ENCODE measurements at regions of chr3 and their contacts with region 1.

Region 1: DNA sequence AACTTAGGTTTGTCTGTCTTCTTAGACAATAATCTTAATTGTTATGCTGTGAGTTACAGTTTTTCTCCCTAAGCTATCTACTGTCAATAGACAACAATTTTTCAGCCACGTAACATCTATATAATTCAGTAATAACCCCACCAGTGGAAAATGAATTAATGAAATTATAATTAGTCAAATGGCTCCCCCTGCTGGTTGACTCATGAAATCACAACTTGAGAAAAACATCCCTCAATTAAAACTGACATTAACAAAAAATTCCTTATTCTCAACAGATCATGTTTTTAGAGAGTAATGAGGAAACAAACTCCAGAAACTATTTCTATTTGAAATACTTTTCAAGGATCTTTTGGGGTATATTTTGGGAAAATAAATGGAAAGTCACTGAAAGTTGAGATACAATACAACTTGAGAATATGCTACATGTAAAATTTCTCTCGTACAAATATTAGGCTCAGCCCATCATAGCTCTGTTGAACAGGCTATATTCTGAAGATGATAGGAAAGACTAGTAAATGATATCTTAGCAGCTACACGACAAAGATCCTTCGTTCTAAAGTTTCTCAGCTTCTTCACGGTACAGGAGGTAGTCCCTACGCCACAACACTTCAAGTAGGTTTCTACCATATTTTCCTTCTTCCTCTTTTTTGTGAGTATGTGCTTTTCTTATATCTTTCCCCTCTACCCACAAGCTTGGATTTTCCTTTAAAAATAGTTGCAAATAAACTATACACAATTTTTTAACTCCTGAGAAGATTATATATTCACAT is 20.7 kb downstream of the PPP1R2 start:
- DNase-seq: peak; percentile 59
- ATAC-seq: no peak
- H3K4me3 Mint-ChIP-seq: no peak overlapping the region
- H3K27ac Mint-ChIP-seq: peak overlapping the region; percentile 2
- H3K4me1 Mint-ChIP-seq: peaks cover 36% of the 10 kb centered on the region
- H3K27me3 Mint-ChIP-seq: no peaks in the 10 kb centered on the region

Region 2: GRCh38 chr3:195226900-195227447 is 295.5 kb before region 1 on chr3:
- CTCF ChIA-PET with region 1: no interaction called
- POLR2A ChIA-PET with region 1: no interaction called
- DNase-seq: peak; percentile 4
- ATAC-seq: peak; percentile 30
- H3K4me3 Mint-ChIP-seq: no peak overlapping the region
- H3K27ac Mint-ChIP-seq: peak overlapping the region; percentile 10
- H3K4me1 Mint-ChIP-seq: peaks cover 19% of the 10 kb centered on the region
- H3K27me3 Mint-ChIP-seq: peaks cover 3% of the 10 kb centered on the region

Region 3: DNA sequence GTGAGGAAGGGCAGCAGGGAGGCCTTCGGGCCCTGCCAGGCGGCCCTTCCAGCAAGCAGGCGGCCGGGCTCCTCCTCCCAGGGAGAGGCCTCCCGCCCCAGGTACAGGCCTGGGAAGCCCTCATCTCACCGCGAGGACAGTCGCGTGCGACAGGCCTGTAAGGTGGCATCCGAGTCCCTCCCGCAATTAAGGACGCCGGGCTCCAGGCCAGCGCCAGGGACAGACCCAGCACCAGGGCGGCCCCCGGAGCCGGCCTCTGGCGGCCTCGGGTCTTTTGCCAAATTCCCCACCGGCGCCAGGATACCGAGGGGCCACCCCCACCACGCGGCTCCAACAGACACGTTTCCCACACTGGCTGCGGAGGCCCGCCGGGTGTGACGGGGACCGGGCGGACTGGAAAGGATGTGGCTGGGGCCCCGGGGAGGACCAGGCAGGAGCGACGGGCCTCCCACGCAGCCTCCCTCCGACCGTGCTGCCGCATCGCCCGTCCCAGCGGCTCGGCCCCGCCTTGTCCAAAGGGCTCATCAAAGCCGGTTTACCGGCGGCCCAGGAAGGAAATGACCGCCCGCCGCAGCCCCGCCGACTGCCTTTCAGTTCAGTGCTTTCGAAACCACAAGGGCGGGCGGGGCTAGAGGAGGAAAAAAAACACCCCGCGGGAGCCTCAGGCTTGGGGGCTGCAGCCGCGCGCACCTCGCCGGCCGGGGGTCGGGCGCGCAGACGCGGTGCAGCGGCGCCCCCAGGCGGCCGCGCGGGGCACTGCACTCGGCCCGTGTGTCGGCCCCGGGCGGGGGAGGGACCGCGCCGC is 262.8 kb before region 1 on chr3:
- CTCF ChIA-PET with region 1: interaction called, 13 read pairs
- POLR2A ChIA-PET with region 1: no interaction called
- DNase-seq: peak; percentile 94
- ATAC-seq: peak; percentile 80
- H3K4me3 Mint-ChIP-seq: peak overlapping the region; percentile 48
- H3K27ac Mint-ChIP-seq: no peak overlapping the region
- H3K4me1 Mint-ChIP-seq: peaks cover 38% of the 10 kb centered on the region
- H3K27me3 Mint-ChIP-seq: no peaks in the 10 kb centered on the region

Region 4: GRCh38 chr3:195508185-195508584 is 14.3 kb before region 1 on chr3:
- CTCF ChIA-PET with region 1: interaction called, 10 read pairs
- POLR2A ChIA-PET with region 1: no interaction called
- DNase-seq: no peak
- ATAC-seq: no peak
- H3K4me3 Mint-ChIP-seq: no peak overlapping the region
- H3K27ac Mint-ChIP-seq: no peak overlapping the region
- H3K4me1 Mint-ChIP-seq: peaks cover 8% of the 10 kb centered on the region
- H3K27me3 Mint-ChIP-seq: no peaks in the 10 kb centered on the region

Region 5: DNA sequence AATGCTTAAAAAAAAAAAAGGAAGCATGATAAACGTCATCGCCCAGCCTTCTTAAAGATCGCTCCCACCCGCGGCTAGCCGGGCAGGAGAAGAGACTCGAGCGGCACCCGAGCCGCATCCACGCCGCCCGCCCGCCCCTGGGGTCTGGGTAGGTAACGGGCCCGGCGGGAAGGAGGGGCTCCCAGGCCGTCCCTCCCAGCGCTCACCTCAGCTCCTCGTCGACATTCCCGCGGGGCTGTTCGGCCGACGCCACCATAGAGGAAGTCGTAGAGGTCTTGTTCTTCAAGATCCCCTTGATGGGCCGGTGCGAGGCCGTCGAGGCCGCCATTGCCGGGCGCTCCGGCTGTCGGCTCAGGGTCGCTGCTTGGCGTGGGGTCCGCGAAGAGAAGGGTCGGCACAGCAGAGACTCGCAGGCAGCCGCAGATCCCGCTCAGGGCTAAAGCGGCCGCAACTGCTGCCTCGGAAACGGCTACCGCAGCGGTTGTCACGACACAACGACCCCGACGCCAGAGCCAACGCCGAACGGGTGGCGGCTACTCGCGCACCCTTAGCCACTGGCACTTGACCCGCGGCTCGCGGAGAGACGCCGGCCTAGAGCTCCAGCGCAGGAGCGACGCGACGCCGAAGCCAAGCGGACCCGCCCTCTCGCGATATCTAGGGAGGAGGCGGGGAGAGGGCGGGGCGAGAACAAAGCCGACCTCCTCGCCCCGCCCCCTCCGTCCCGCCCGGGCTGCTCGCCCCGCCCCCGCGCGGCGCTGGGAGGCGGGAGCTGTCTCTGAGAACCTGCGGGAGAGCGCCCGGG is 20.5 kb after region 1 on chr3 and contains the start of gene PPP1R2:
- CTCF ChIA-PET with region 1: interaction called, 68 read pairs
- POLR2A ChIA-PET with region 1: interaction called, 4 read pairs
- DNase-seq: peak; percentile 93
- ATAC-seq: peak; percentile 82
- H3K4me3 Mint-ChIP-seq: peak within 1 kb of the TSS; percentile 92
- H3K27ac Mint-ChIP-seq: peak within 1 kb of the TSS; percentile 89
- H3K4me1 Mint-ChIP-seq: peaks cover 75% of the 10 kb centered on the region
- H3K27me3 Mint-ChIP-seq: no peaks in the 10 kb centered on the region
- total RNA-seq, gene PPP1R2: 72.0 to 72.6 TPM

Region 6: DNA sequence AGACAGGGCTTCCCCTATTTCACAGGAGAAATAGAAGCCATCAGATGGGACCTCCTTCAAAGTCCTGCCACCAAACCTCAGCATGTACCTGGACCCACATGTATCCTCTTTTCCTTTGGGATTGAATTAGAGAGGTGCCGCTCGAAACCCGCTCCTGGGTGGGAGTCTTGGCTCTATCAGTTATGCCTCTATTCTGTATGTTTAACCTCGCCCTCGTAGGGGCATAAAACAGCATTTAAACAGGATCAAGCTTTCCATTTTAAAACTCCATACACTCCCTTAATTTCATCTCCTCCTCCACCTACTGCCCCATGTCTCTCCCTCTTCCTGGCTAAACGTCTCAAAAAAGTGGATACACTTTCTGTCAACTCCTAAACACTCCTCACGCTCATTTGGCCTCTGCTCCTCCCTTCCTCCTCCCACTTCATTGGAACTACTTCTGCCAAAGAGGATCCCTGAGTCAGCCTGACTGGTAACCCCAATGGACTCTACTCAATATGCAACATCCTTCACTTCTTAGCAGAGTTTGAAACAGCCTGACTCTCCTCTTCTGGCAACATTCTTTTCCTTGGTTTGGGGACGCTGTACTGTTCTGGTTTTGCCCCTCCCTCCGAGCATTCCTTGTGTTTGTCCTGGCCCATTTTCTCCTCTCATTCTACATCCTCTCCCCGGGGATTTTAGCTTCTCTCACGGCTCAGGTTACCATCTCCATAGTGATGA is 175.3 kb after region 1 on chr3:
- CTCF ChIA-PET with region 1: no interaction called
- POLR2A ChIA-PET with region 1: no interaction called
- DNase-seq: peak; percentile 20
- ATAC-seq: no peak
- H3K4me3 Mint-ChIP-seq: no peak overlapping the region
- H3K27ac Mint-ChIP-seq: no peak overlapping the region
- H3K4me1 Mint-ChIP-seq: no peaks in the 10 kb centered on the region
- H3K27me3 Mint-ChIP-seq: no peaks in the 10 kb centered on the region

Measured in activated CD8-positive, alpha-beta T cell treated with anti-CD3 and anti-CD28 coated beads, Interleukin-2, amount 10 ng/mL, durations not matched to agents 7 days and 5 days (primary cell).